ENCODE measurements at regions of chr19 and their contacts with region 1.

Region 1: GRCh38 chr19:44093931-44094765 is at the start of gene ZNF224:
- DNase-seq: peak; percentile 90
- H3K4me3 Mint-ChIP-seq: peak within 1 kb of the TSS; percentile 95
- H3K27ac Mint-ChIP-seq: peak within 1 kb of the TSS; percentile 88
- H3K4me1 Mint-ChIP-seq: peaks cover 14% of the 10 kb centered on the region
- H3K27me3 Mint-ChIP-seq: no peaks in the 10 kb centered on the region
- total RNA-seq, gene ZNF224: 12.8 to 14.0 TPM

Region 2: DNA sequence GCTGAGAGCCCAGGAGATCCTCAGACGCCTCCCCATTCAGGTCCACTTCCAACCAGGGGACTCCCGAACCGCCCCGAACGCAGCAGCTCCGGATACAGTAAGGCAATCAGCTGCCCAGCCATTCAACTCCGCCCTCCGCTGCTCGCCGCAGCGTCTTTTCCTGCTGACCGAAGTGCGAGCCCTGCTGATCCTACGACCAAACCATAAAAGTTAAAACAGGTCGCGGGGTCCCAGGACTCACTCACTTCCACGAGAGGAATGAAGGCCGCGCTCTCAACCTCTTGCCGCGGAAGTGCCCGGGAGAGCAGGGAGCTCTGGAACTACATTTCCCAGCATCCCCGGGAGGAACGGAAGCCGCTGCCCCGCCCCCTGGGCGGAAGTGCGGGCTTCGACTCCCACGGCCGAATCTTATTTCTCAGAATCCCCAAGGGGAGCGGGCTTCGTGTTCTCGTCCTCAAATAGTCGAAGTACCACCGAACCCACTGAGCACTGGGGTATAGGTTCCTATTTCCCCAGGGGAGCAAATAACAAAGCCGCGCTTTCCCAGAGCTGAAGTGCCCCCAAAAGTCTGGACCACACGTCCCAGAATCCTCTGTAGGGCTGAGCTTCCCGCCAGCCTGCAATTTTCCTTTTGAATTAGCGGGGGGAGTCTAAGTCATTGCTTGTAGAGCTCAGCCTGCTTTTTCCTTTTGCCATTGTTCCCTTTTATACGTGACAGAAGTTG is 159.0 kb before region 1 on chr19 and contains the start of gene ZNF45:
- CTCF ChIA-PET with region 1: interaction called, 5 read pairs
- POLR2A ChIA-PET with region 1: no interaction called
- intact Hi-C with region 1: loop called (anchors 10 kb)
- DNase-seq: peak; percentile 92
- H3K4me3 Mint-ChIP-seq: peak within 1 kb of the TSS; percentile 93
- H3K27ac Mint-ChIP-seq: peak within 1 kb of the TSS; percentile 81
- H3K4me1 Mint-ChIP-seq: peaks cover 9% of the 10 kb centered on the region
- H3K27me3 Mint-ChIP-seq: no peaks in the 10 kb centered on the region
- total RNA-seq, gene ZNF45: 7.7 to 9.6 TPM

Region 3: DNA sequence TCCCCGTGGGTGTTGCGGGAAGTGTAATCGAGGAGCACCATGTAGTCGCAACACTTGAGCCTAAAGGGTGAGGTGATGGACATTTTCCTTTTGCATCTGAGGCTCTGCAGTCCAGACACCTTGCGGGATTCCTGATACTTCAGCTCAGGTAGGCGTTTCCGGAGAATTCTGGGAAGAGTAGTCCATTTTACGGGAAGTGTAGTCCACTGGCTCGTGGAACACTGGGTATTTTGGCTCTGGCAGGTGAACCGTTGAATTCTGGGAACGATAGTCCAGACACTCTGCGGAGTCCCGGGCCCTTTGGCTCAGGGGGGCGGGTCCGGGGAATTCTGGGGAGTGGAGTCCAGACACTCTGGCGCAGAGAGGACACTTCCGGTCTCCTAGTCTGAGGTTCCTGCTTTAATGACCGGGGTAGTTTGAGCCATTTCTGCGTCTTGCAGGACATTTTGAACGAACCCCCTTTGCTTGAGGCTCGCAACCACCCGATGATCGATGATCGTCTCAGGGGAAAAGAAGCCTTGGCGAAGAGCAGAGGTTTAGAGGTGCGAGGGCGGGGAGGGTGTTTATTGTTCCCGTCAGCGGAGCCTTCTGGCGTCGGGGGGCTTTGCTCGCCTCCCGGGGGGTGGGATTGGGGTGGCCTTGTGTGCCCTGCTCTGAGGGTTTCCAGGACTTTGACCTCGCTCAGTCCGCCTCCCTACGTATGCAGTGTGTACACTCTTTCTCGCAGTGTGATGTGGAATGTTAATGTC is 42.3 kb before region 1 on chr19 and contains the start of gene ZNF223:
- CTCF ChIA-PET with region 1: interaction called, 3 read pairs
- POLR2A ChIA-PET with region 1: no interaction called
- intact Hi-C with region 1: loop called (anchors 1 kb)
- DNase-seq: peak; percentile 69
- H3K4me3 Mint-ChIP-seq: peak within 1 kb of the TSS; percentile 82
- H3K27ac Mint-ChIP-seq: peak within 1 kb of the TSS; percentile 49
- H3K4me1 Mint-ChIP-seq: peaks cover 14% of the 10 kb centered on the region
- H3K27me3 Mint-ChIP-seq: peaks cover 7% of the 10 kb centered on the region
- total RNA-seq, gene ZNF223: 0.55 to 0.73 TPM

Region 4: GRCh38 chr19:44066305-44066704 is 27.8 kb before region 1 on chr19:
- CTCF ChIA-PET with region 1: no interaction called
- POLR2A ChIA-PET with region 1: no interaction called
- intact Hi-C with region 1: no loop called
- DNase-seq: no peak
- H3K4me3 Mint-ChIP-seq: no peak overlapping the region
- H3K27ac Mint-ChIP-seq: no peak overlapping the region
- H3K4me1 Mint-ChIP-seq: peaks cover 4% of the 10 kb centered on the region
- H3K27me3 Mint-ChIP-seq: no peaks in the 10 kb centered on the region

Region 5: DNA sequence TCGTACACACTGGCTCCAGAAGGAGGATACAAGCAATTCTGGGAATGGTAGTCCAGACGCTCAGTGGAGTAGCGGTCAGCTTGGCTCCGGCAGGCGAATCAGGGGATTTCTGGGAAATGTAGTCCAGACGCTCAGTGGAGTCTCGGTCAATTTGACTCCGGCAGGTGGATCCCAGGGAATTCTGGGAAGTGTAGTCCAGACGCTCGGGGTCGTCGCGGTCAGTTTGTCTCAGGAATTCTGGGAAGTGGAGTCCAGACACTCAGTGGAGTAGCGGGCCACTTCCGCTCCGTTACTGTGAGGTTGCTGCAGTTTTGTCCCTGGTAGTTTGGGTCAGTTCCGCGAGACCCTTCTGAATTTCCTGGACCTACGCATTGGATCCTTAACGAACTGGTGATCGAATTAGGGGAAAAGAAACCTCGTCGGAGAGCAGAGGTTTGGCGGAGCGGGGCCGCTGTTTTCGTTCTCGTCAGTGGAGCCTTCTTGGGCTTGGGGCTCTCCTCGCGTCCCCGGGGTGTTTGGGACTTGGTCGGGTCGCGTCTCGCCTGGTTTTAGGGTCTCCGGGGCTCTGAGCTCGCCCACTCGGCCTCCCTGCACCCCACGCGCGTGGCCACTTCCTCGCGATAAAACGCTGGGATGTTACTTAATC is 19.1 kb after region 1 on chr19 and contains the start of gene ZNF225:
- CTCF ChIA-PET with region 1: interaction called, 4 read pairs
- POLR2A ChIA-PET with region 1: no interaction called
- intact Hi-C with region 1: loop called (anchors 1 kb)
- DNase-seq: peak; percentile 92
- H3K4me3 Mint-ChIP-seq: peak within 1 kb of the TSS; percentile 91
- H3K27ac Mint-ChIP-seq: peak within 1 kb of the TSS; percentile 74
- H3K4me1 Mint-ChIP-seq: peaks cover 22% of the 10 kb centered on the region
- H3K27me3 Mint-ChIP-seq: no peaks in the 10 kb centered on the region
- total RNA-seq, gene ZNF225: 2.5 to 2.9 TPM

Region 6: DNA sequence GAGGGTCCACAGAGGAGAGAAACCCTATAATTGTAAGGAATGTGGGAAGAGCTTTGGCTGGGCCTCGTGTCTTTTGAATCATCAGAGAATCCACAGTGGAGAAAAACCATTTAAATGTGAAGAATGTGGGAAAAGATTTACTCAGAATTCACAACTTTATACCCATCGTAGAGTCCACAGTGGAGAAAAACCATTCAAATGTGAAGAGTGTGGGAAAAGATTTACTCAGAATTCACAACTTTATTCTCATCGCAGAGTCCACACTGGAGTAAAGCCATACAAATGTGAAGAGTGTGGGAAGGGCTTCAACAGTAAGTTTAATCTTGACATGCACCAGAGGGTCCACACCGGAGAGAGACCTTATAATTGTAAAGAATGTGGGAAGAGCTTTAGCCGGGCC is 37.8 kb after region 1 on chr19:
- CTCF ChIA-PET with region 1: no interaction called
- POLR2A ChIA-PET with region 1: no interaction called
- intact Hi-C with region 1: no loop called
- DNase-seq: no peak
- H3K4me3 Mint-ChIP-seq: no peak overlapping the region
- H3K27ac Mint-ChIP-seq: no peak overlapping the region
- H3K4me1 Mint-ChIP-seq: no peaks in the 10 kb centered on the region
- H3K27me3 Mint-ChIP-seq: no peaks in the 10 kb centered on the region

Region 7: GRCh38 chr19:44304659-44305193 is 210.6 kb after region 1 on chr19 and contains the start of gene ZNF235:
- CTCF ChIA-PET with region 1: no interaction called
- POLR2A ChIA-PET with region 1: no interaction called
- intact Hi-C with region 1: loop called (anchors 1 kb)
- DNase-seq: peak; percentile 87
- H3K4me3 Mint-ChIP-seq: peak within 1 kb of the TSS; percentile 83
- H3K27ac Mint-ChIP-seq: peak within 1 kb of the TSS; percentile 18
- H3K4me1 Mint-ChIP-seq: peaks cover 15% of the 10 kb centered on the region
- H3K27me3 Mint-ChIP-seq: no peaks in the 10 kb centered on the region
- total RNA-seq, gene ZNF235: 1.2 to 1.3 TPM